Heart left ventricle (tissue), 16 donors: ENCODE measurements at regions of chr5 and their contacts with region 1.

Region 1: GRCh38 chr5:171630027-171630669 is 155.5 kb upstream of the SMIM23 start:
- DNase-seq: peak; percentile 68 to 83 (median 71)
- ATAC-seq: peak; percentile 87 to 97 (median 93)
- H3K4me3 ChIP-seq: peak overlapping the region in 5 of 12 donors; percentile 8 to 32 (median 9)
- H3K27ac ChIP-seq: no peak overlapping the region
- H3K4me1 ChIP-seq: peaks cover 0 to 31% (median 8%) of the 10 kb centered on the region in 12 donors
- H3K27me3 ChIP-seq: no peaks in the 10 kb centered on the region
- CTCF ChIP-seq: peak in 11 of 12 donors; percentile 21 to 71 (median 64)
- POLR2A ChIP-seq: no peak

Region 2: GRCh38 chr5:171571663-171572062 is 58.5 kb before region 1 on chr5:
- intact Hi-C with region 1: no loop called
- DNase-seq: no peak
- ATAC-seq: no peak
- H3K4me3 ChIP-seq: no peak overlapping the region
- H3K27ac ChIP-seq: peak overlapping the region in 1 of 12 donors; percentile 78
- H3K4me1 ChIP-seq: peaks cover 0 to 18% (median 0%) of the 10 kb centered on the region in 12 donors
- H3K27me3 ChIP-seq: no peaks in the 10 kb centered on the region
- CTCF ChIP-seq: no peak
- POLR2A ChIP-seq: no peak

Region 3: GRCh38 chr5:171743436-171744076 is 113.4 kb after region 1 on chr5:
- intact Hi-C with region 1: loop called in 5 of 10 experiments (anchors 5 to 10 kb)
- DNase-seq: no peak
- ATAC-seq: no peak
- H3K4me3 ChIP-seq: no peak overlapping the region
- H3K27ac ChIP-seq: no peak overlapping the region
- H3K4me1 ChIP-seq: peaks cover 0 to 17% (median 0%) of the 10 kb centered on the region in 12 donors
- H3K27me3 ChIP-seq: no peaks in the 10 kb centered on the region
- CTCF ChIP-seq: no peak
- POLR2A ChIP-seq: no peak

Region 4: GRCh38 chr5:171840066-171840465 is 209.9 kb after region 1 on chr5:
- intact Hi-C with region 1: loop called in 7 of 10 experiments (anchors 5 to 10 kb)
- DNase-seq: no peak
- ATAC-seq: no peak
- H3K4me3 ChIP-seq: no peak overlapping the region
- H3K27ac ChIP-seq: no peak overlapping the region
- H3K4me1 ChIP-seq: peaks cover 0 to 21% (median 9%) of the 10 kb centered on the region in 12 donors
- H3K27me3 ChIP-seq: no peaks in the 10 kb centered on the region
- CTCF ChIP-seq: no peak
- POLR2A ChIP-seq: no peak

Region 5: GRCh38 chr5:171850324-171851285 is 220.5 kb after region 1 on chr5:
- intact Hi-C with region 1: loop called in 8 of 10 experiments (anchors 2 to 10 kb)
- DNase-seq: no peak
- ATAC-seq: peak in 3 of 4 donors; percentile 8 to 39 (median 31)
- H3K4me3 ChIP-seq: no peak overlapping the region
- H3K27ac ChIP-seq: peak overlapping the region in 1 of 12 donors; percentile 36
- H3K4me1 ChIP-seq: peaks cover 0 to 16% (median 0%) of the 10 kb centered on the region in 12 donors
- H3K27me3 ChIP-seq: no peaks in the 10 kb centered on the region
- CTCF ChIP-seq: peak in 6 of 12 donors; percentile 16 to 36 (median 30)
- POLR2A ChIP-seq: no peak

Region 6: DNA sequence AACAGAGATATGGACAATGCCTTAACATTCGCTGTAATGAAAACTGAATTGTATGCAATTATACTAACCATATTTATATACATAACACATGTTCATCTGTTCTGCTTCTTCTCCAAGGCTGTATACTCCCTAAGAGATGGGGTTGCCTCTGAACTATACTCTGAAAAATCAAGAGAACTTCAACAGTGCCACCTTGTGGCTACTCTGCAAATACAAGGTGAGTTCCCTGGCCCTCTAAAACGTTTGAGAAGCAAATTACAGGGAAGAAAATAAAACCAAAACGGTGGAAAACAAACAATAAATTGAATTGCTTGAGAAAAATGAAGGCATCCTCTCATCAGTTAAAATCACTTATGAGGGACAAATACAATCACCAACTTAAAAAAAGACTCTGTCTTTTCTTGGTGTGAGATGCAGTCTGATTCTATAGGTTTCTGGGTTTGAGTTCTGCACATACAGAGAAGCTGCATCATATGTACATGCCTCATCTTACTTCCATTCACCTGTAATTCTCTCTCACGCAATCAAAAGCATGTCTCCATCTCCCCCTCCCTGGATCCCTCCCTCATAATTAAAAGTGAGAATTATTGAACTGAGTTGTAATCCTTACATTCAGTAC is 277.7 kb after region 1 on chr5:
- intact Hi-C with region 1: loop called in 9 of 10 experiments (anchors 2 to 10 kb)
- DNase-seq: peak in 3 of 5 donors; percentile 30 to 49 (median 40)
- ATAC-seq: peak; percentile 49 to 85 (median 79)
- H3K4me3 ChIP-seq: no peak overlapping the region
- H3K27ac ChIP-seq: no peak overlapping the region
- H3K4me1 ChIP-seq: peaks cover 0 to 44% (median 27%) of the 10 kb centered on the region in 12 donors
- H3K27me3 ChIP-seq: no peaks in the 10 kb centered on the region
- CTCF ChIP-seq: peak; percentile 68 to 87 (median 78)
- POLR2A ChIP-seq: no peak